Activated B cell treated with CpG ODN at 0.5 μM for 24 hours (primary cell): ENCODE measurements at regions of chr2 and their contacts with region 1.

Region 1: DNA sequence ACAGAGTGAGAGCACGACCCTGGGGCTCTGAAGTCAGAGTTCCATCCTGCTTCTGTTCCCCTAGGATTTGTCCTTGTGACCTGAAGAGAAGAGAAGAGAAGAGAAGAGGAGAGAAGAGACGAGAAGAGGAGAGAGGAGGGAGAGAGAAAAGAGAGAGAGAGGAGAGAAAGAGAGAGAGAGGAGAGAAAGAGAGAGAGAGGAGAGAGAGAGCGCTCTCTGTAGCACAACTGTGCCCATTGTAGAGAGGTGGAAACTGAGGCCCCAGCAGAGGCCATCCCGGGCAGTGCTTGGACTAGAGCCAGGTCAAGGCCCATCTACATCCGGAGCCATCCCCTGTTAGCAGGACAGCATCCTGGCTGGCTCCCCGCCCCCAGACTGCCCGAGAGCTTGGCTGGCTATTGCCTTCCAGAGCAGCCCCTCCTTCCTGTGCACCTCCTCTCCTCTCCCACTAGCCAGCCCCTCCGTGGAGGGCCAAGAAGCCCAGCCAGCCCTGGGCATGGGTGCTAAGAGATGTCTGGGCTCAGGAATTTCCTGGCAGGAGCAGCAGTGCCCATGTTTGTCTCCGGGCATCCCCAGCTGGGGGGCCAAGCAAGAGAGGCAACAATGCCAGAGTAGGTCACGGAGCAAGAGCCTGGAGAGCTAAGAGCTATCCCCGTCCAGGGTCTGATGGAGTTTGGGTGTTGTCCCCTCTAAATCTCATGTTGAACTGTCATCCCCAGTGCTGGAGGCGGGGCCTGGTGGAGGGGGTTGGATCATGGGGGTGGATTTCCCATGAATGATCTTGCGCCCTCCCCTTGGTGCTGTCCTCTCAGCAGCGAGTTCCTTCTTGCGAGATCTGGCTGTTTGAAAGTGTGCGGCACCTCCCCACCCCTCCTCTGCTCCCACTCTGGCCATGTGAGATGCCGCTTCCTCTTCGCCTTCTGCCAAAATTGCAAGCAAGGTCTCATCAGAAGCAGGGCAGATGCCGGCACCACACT is 18.2 kb upstream of the GPR55 start:
- DNase-seq: no peak
- ATAC-seq: peak; percentile 83
- H3K4me3 Mint-ChIP-seq: peak overlapping the region; percentile 70
- H3K27ac Mint-ChIP-seq: peak overlapping the region; percentile 80
- H3K4me1 Mint-ChIP-seq: peaks cover 21% of the 10 kb centered on the region
- H3K27me3 Mint-ChIP-seq: peaks cover 11% of the 10 kb centered on the region
- CTCF ChIP-seq: no peak

Region 2: GRCh38 chr2:230924470-230925341 is 18.5 kb before region 1 on chr2 and contains the start of gene GPR55:
- CTCF ChIA-PET with region 1: no interaction called
- POLR2A ChIA-PET with region 1: no interaction called
- intact Hi-C with region 1: loop called (anchors 1 kb)
- DNase-seq: peak; percentile 18
- ATAC-seq: peak; percentile 81
- H3K4me3 Mint-ChIP-seq: peak within 1 kb of the TSS; percentile 80
- H3K27ac Mint-ChIP-seq: peak within 1 kb of the TSS; percentile 79
- H3K4me1 Mint-ChIP-seq: peaks cover 40% of the 10 kb centered on the region
- H3K27me3 Mint-ChIP-seq: no peaks in the 10 kb centered on the region
- CTCF ChIP-seq: no peak
- total RNA-seq, gene GPR55: 4.5 and 6.3 TPM in 2 replicates

Region 3: GRCh38 chr2:230956827-230957755 is 13.9 kb after region 1 on chr2:
- CTCF ChIA-PET with region 1: no interaction called
- POLR2A ChIA-PET with region 1: no interaction called
- intact Hi-C with region 1: loop called (anchors 1 kb)
- DNase-seq: no peak
- ATAC-seq: peak; percentile 83
- H3K4me3 Mint-ChIP-seq: peak overlapping the region; percentile 87
- H3K27ac Mint-ChIP-seq: peak overlapping the region; percentile 80
- H3K4me1 Mint-ChIP-seq: peaks cover 18% of the 10 kb centered on the region
- H3K27me3 Mint-ChIP-seq: peaks cover 29% of the 10 kb centered on the region
- CTCF ChIP-seq: no peak

Region 4: GRCh38 chr2:230974096-230974913 is 31.1 kb after region 1 on chr2:
- CTCF ChIA-PET with region 1: no interaction called
- POLR2A ChIA-PET with region 1: no interaction called
- intact Hi-C with region 1: loop called (anchors 1 kb)
- DNase-seq: peak; percentile 43
- ATAC-seq: peak; percentile 88
- H3K4me3 Mint-ChIP-seq: peak overlapping the region; percentile 60
- H3K27ac Mint-ChIP-seq: peak overlapping the region; percentile 92
- H3K4me1 Mint-ChIP-seq: peaks cover 44% of the 10 kb centered on the region
- H3K27me3 Mint-ChIP-seq: peaks cover 2% of the 10 kb centered on the region
- CTCF ChIP-seq: no peak

Region 5: GRCh38 chr2:231056453-231057424 is 113.5 kb after region 1 on chr2 and contains the start of gene PSMD1:
- CTCF ChIA-PET with region 1: no interaction called
- POLR2A ChIA-PET with region 1: no interaction called
- intact Hi-C with region 1: no loop called
- DNase-seq: peak; percentile 90
- ATAC-seq: peak; percentile 85
- H3K4me3 Mint-ChIP-seq: peak within 1 kb of the TSS; percentile 98
- H3K27ac Mint-ChIP-seq: peak within 1 kb of the TSS; percentile 100
- H3K4me1 Mint-ChIP-seq: peaks cover 43% of the 10 kb centered on the region
- H3K27me3 Mint-ChIP-seq: peaks cover 3% of the 10 kb centered on the region
- CTCF ChIP-seq: peak; percentile 65
- total RNA-seq, gene PSMD1: 99.9 and 105 TPM in 2 replicates